ENCODE measurements at regions of chr12 and their contacts with region 1.

Region 1: DNA sequence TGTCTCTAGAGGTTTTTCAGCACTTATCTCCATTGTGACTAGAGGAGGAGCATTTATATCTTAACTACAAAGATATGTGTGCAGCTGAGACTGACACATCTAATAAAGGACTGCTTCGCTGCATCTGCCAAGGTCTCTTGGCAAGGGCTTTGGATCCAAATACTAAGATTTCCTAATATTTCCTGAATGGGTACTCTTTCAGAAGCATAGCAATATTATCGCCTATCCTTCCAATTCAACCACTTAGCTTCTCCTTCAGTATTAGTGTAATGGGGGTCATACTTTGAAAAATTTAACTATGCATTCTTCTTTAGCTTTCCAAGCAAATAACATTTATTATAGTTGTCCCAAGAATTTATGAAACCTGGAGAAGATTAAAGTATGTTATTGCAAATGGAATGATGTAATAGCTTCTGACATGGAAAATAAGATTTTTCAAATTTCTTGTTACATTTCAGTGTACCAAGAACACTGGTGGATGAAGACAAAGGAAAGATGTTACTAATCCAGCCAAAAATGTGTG is 243.0 kb upstream of the PDE3A start:
- DNase-seq: no peak
- H3K4me3 ChIP-seq: no peak overlapping the region
- H3K27ac ChIP-seq: no peak overlapping the region
- H3K4me1 ChIP-seq: no peaks in the 10 kb centered on the region
- H3K27me3 ChIP-seq: no peaks in the 10 kb centered on the region
- CTCF ChIP-seq: no peak
- POLR2A ChIP-seq: no peak

Region 2: DNA sequence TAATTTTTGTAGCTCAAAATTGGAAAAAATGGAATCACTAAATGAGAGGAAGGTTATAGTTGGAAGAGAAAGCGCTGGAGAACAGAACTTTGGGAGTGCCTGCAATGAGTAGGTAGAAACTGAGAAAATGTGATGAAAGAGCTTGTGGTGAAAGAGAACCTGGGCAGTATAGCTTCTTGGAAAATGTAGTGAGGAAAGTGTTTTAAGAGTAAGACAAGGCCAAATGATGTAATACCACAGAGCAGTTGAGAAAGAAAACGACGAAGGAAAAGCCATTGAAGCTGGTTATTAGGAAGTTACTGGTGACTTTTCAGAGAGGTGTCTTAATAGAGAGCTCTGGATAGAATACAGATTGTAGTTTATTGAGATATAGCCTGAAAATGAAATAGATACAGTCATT is 430.7 kb before region 1 on chr12:
- intact Hi-C with region 1: no loop called
- DNase-seq: no peak
- H3K4me3 ChIP-seq: no peak overlapping the region
- H3K27ac ChIP-seq: no peak overlapping the region
- H3K4me1 ChIP-seq: no peaks in the 10 kb centered on the region
- H3K27me3 ChIP-seq: no peaks in the 10 kb centered on the region
- CTCF ChIP-seq: no peak
- POLR2A ChIP-seq: no peak

Region 3: DNA sequence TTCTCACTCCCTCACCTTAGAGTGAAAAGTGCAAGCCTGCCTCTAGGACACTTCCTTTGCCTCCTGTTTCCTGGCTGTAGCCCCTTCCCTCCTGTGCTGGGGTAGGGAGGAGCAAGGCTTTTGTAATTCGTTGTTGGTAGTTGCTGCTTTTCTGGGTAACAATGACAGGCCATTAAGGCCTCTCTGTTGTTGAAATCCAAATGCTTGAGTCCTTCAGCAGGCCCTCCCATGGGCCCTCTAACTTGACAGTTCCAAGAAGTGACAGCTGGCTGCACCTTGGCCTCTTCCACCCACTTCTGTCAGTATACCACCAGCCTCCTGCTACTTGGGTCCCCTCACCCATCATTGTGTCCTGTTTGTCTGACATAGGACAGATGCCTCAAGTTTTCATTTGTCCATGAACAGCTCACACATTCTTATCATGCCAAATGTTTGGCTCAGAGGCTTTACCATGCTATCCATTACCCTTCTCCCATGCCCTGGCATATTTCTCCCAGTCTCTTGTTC is 139.3 kb after region 1 on chr12:
- intact Hi-C with region 1: loop called (anchors 10 kb)
- DNase-seq: no peak
- H3K4me3 ChIP-seq: no peak overlapping the region
- H3K27ac ChIP-seq: no peak overlapping the region
- H3K4me1 ChIP-seq: no peaks in the 10 kb centered on the region
- H3K27me3 ChIP-seq: no peaks in the 10 kb centered on the region
- CTCF ChIP-seq: no peak
- POLR2A ChIP-seq: no peak

Measured in prostate gland (tissue), 2 donors.